Activated T-helper 1 cell treated with anti-CD3 and anti-CD28 coated beads, Interleukin-12 subunit alpha, Interleukin-12 subunit beta, Interleukin-2, Interleukin-4 antibody, amounts not matched to agents 30 ng/mL and 10 ng/mL and 1 ng/mL, durations not matched to agents 14 hours and 24 hours and 36 hours (primary cell): ENCODE measurements at regions of chr13 and their contacts with region 1.

Region 1: DNA sequence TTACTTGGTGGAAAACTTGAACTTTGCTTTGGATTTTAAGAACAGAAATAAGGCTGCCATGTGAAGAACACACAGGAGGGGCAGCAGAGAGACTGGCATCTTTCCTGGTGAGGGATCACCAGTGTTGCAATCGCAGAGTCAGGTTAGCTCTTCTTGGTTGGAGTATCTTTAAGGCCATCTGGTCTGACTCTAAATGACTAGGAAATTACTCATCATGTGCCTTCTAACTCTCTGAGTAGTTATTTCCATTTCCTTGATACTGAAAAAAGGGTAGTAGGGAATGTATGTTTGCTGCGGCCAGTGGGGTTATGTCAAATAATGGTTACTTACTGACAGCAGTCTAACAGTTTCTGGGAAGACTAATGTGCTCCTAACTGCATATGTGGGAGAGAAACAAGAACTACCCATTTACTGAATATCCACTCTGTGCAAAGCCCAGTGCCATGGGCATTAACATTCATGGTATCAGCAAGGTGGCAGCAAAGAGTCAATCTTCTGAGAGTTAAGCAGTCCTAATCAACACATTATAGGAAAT is 122.1 kb downstream of the COG6 start:
- DNase-seq: peak; percentile 16
- H3K4me3 Mint-ChIP-seq: peak overlapping the region; percentile 45
- H3K27ac Mint-ChIP-seq: peak overlapping the region; percentile 91
- H3K4me1 Mint-ChIP-seq: peaks cover 50% of the 10 kb centered on the region
- H3K27me3 Mint-ChIP-seq: no peaks in the 10 kb centered on the region

Region 2: GRCh38 chr13:39538816-39539790 is 238.5 kb before region 1 on chr13:
- intact Hi-C with region 1: no loop called
- DNase-seq: no peak
- H3K4me3 Mint-ChIP-seq: no peak overlapping the region
- H3K27ac Mint-ChIP-seq: no peak overlapping the region
- H3K4me1 Mint-ChIP-seq: no peaks in the 10 kb centered on the region
- H3K27me3 Mint-ChIP-seq: no peaks in the 10 kb centered on the region

Region 3: GRCh38 chr13:39823063-39823713 is 45.6 kb after region 1 on chr13:
- intact Hi-C with region 1: loop called (anchors 5 kb)
- DNase-seq: no peak
- H3K4me3 Mint-ChIP-seq: peak overlapping the region; percentile 34
- H3K27ac Mint-ChIP-seq: peak overlapping the region; percentile 32
- H3K4me1 Mint-ChIP-seq: peaks cover 26% of the 10 kb centered on the region
- H3K27me3 Mint-ChIP-seq: peaks cover 3% of the 10 kb centered on the region

Region 4: DNA sequence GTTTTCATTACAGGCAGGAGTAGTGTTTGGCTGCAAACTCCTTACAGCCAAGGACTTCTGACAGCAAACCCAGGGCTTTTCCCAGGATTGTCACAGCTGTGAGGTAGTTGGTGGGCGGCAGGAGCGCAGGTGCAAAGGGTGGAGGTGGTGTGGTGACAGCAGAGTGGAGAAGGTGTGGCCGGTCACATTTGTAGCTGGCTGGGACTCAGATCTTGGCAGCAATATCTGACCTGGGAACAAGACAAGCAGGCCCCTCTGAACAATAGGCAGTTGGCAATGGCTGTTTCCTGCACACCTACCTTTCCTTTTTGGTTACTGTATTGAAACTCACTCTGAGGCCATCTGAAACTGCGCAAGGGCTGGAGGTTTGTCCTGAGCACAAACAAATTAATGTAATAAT is 205.2 kb after region 1 on chr13:
- intact Hi-C with region 1: no loop called
- DNase-seq: no peak
- H3K4me3 Mint-ChIP-seq: no peak overlapping the region
- H3K27ac Mint-ChIP-seq: no peak overlapping the region
- H3K4me1 Mint-ChIP-seq: no peaks in the 10 kb centered on the region
- H3K27me3 Mint-ChIP-seq: peaks cover 8% of the 10 kb centered on the region

Region 5: DNA sequence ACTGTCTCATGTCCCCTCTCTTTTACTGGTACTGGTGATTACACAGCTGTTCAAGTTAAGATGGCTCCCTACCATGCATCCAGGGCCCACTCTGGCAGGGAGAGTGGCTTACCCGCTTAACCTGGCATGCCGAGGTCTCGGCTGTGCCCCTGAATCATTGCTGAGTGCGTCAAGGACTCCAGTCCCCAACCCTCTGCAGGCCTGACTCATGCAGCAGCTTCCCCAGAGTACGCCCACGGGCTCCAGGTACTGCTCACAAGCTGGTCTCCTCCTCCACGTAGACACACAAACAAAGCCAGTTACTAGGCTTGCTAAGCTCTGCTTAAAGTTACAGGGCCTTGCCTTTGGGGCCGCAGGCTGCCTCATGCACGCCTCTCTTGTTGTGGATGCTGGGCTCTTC is 325.3 kb after region 1 on chr13:
- intact Hi-C with region 1: loop called (anchors 1 kb)
- DNase-seq: peak; percentile 51
- H3K4me3 Mint-ChIP-seq: peak overlapping the region; percentile 74
- H3K27ac Mint-ChIP-seq: peak overlapping the region; percentile 97
- H3K4me1 Mint-ChIP-seq: peaks cover 64% of the 10 kb centered on the region
- H3K27me3 Mint-ChIP-seq: no peaks in the 10 kb centered on the region

Region 6: DNA sequence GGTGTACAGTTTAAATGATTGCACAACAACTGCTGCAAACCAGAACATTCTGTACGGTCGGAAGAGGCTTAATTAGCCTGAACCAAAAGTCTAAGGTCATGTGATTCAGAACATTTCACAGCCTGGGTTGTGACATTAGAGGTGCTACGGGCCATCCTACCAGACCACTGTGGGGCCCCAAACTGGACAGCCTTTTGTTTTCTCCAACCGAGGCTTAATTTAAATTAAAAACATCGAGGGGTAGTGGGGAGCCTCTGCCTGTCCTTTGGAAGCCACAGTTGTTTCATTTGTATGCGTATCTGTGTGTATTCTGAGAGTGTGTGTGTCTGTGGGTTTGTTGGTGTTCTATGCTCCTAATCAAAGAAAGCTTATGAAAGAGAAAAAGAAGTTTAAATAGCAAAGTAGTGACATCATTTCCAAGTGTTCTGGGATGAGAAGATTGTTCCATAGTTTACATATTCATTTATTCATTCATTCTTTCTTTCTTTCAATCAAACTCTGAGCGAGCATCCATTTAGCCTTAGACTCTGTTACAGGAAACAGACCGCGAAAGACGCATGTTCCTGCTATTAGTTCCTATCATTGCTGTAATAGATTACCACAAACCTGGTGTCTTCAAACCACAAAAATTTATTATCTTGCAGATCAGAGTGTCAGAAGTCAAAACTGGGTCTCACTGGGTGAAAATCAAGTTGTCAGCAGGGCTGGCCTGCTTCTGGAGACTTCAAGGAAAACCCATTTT is 444.0 kb after region 1 on chr13:
- intact Hi-C with region 1: loop called (anchors 5 kb)
- DNase-seq: no peak
- H3K4me3 Mint-ChIP-seq: peak overlapping the region; percentile 37
- H3K27ac Mint-ChIP-seq: peak overlapping the region; percentile 69
- H3K4me1 Mint-ChIP-seq: peaks cover 43% of the 10 kb centered on the region
- H3K27me3 Mint-ChIP-seq: no peaks in the 10 kb centered on the region

Region 7: GRCh38 chr13:40517486-40518480 is 740.2 kb after region 1 on chr13:
- intact Hi-C with region 1: loop called (anchors 2 kb)
- DNase-seq: no peak
- H3K4me3 Mint-ChIP-seq: peak overlapping the region; percentile 62
- H3K27ac Mint-ChIP-seq: peak overlapping the region; percentile 69
- H3K4me1 Mint-ChIP-seq: peaks cover 83% of the 10 kb centered on the region
- H3K27me3 Mint-ChIP-seq: no peaks in the 10 kb centered on the region